Activated CD4-positive, alpha-beta T cell treated with anti-CD3 and anti-CD28 coated beads for 36 hours (primary cell): ENCODE measurements at regions of chr6 and their contacts with region 1.

Region 1: DNA sequence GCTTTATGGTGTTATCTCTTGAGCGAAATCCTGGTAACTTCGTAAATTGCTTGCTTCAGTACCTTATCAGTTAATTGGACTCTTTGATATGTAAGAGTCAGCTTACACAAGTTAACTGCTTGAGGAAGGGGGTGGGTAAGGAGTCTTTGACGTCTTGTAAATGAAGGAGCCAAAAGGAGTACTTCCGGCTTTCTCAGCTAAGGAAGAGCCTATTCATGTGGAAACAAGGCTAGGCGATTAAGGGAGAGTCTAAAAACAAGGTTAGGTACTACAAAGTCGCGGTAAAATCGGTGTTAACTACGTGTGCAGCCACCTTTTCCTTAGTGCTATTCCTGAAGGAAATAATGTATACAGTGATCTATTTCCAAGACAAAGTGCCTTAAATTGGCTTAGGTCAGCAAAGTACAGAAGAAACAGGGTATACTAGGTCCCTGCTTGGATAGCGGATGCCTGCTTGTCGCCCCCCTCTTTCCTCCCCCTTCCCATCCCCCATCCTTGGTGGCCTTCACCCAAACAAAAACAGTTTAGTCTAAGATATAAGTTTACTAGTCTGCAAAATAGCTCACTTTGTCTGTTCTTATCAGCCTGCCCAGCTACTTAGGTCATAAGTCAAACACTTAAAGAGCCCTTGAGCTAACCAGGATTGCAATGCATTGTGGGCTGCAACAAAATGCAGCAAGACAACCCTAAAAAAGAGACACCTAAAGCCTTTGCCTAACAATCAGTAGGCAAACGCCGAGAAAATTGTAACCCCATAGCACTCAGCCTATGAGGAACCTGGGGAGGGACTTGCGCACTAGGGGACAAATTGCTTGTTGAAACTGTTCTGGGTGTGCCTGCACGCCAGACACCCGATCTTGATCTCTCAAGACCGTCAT is 147.3 kb downstream of the TRIM27 start:
- DNase-seq: no peak
- ATAC-seq: no peak
- H3K4me3 Mint-ChIP-seq: no peak overlapping the region
- H3K27ac Mint-ChIP-seq: no peak overlapping the region
- H3K4me1 Mint-ChIP-seq: peaks cover 10% of the 10 kb centered on the region
- H3K27me3 Mint-ChIP-seq: peaks cover 88% of the 10 kb centered on the region

Region 2: GRCh38 chr6:27290065-27290849 is 1486.3 kb before region 1 on chr6:
- CTCF ChIA-PET with region 1: no interaction called
- POLR2A ChIA-PET with region 1: no interaction called
- intact Hi-C with region 1: loop called in 1 of 2 experiments (anchors 2 kb)
- DNase-seq: no peak
- ATAC-seq: no peak
- H3K4me3 Mint-ChIP-seq: no peak overlapping the region
- H3K27ac Mint-ChIP-seq: no peak overlapping the region
- H3K4me1 Mint-ChIP-seq: peaks cover 14% of the 10 kb centered on the region
- H3K27me3 Mint-ChIP-seq: peaks cover 80% of the 10 kb centered on the region

Region 3: DNA sequence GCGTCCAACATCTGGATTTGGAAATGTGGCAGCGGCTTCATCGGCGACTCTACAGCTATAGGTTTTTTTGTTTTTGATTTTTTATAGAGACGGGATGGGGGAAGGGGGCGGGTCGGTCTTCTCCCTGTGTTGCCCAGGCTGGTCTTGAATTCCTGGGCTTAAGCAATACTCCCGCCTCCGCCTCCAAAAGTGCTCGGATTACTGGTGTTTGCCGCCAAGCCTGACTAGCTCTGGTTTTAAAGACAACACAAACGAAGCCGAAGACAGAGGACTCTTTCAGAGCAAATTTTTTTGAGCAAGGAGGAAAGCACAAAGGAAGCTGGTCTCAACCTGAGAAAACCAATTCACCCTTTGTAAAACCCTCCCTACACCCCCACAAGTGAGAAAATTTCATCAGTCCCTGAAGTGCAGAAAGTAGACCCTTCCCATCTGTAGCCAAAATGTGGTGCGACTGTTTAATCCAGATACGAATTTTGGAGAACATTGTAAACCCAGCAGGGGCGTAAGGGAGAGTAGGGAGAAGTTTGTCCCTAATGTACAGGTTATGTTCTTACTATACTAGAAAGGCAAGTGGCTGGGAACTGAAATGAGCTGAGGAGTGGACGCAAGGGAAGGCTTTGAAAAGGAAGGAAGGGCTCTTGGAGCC is 38.6 kb before region 1 on chr6:
- CTCF ChIA-PET with region 1: interaction called, 4 read pairs
- POLR2A ChIA-PET with region 1: no interaction called
- intact Hi-C with region 1: loop called (anchors 2 to 5 kb)
- DNase-seq: no peak
- ATAC-seq: no peak
- H3K4me3 Mint-ChIP-seq: peak overlapping the region; percentile 11
- H3K27ac Mint-ChIP-seq: no peak overlapping the region
- H3K4me1 Mint-ChIP-seq: peaks cover 5% of the 10 kb centered on the region
- H3K27me3 Mint-ChIP-seq: peaks cover 62% of the 10 kb centered on the region

Region 4: GRCh38 chr6:28807682-28808280 is 31.3 kb after region 1 on chr6:
- CTCF ChIA-PET with region 1: no interaction called
- POLR2A ChIA-PET with region 1: no interaction called
- intact Hi-C with region 1: loop called (anchors 1 to 5 kb)
- DNase-seq: peak; percentile 60
- ATAC-seq: peak; percentile 51
- H3K4me3 Mint-ChIP-seq: peak overlapping the region; percentile 18
- H3K27ac Mint-ChIP-seq: no peak overlapping the region
- H3K4me1 Mint-ChIP-seq: peaks cover 5% of the 10 kb centered on the region
- H3K27me3 Mint-ChIP-seq: peaks cover 75% of the 10 kb centered on the region

Region 5: DNA sequence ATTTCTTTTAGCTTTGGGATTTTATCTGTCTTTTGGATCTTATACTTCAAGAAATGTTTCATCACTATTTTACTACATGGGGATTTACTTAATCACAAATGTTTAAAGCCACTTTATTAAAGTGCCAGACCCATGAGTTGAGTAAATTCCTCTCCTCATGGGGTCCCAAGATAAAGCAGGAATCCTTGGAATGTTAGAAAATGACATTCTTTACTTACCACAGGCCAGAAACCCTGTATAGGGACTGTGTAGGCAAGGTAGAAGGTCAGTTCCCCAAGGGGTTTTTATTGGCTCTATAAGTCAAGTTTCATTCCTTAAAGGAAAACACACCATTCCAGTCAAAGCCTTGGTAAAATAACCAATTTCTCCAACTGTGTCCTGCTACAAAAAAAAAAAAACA is 365.8 kb after region 1 on chr6:
- CTCF ChIA-PET with region 1: no interaction called
- POLR2A ChIA-PET with region 1: no interaction called
- intact Hi-C with region 1: no loop called
- DNase-seq: no peak
- ATAC-seq: no peak
- H3K4me3 Mint-ChIP-seq: no peak overlapping the region
- H3K27ac Mint-ChIP-seq: no peak overlapping the region
- H3K4me1 Mint-ChIP-seq: no peaks in the 10 kb centered on the region
- H3K27me3 Mint-ChIP-seq: peaks cover 20% of the 10 kb centered on the region